SK-MEL-5 (cell line): ENCODE measurements at regions of chr3 and their contacts with region 1.

Region 1: DNA sequence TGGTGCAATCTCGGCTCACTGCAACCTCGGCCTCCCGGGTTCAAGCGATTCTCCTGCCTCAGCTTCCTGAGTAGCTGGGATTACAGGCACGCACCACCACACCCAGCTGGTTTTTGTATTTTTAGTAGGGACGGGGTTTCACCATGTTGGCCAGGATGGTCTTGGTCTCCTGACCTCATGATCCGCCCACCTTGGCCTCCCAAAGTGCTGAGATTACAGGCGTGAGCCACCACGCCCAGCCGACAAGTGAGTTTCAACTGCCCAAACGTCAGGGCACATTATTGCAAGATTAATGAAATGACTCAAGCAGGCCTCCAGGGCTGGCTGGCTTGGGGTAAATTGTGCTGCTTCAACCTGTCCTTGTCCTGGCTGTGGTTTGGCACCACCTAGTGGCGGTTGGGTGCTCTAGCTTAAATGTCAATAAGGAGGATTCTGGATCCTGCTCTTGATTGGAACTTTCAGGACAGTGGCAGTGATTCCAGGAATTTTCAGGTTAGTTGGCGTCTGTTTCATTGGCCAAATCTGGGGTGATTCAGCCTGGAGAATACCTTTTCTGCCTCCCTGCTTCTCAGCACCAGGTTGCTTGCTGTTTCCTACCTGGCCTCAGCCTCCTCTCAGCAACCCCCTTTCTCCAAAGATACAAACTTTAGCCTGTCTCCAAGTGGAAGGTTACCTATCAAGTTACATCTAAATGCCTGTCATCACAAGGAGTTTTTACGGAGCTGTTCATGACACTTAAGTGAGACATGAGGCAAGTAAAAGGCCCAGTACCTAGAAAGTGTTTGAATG is 32.4 kb upstream of the SACM1L start:
- DNase-seq: peak; percentile 94

Region 2: GRCh38 chr3:45507820-45508317 is 148.9 kb before region 1 on chr3:
- in situ Hi-C with region 1: loop called (anchors 25 kb)
- DNase-seq: peak; percentile 80

Region 3: GRCh38 chr3:45915518-45916231 is 258.9 kb after region 1 on chr3:
- in situ Hi-C with region 1: no loop called
- DNase-seq: no peak